Cardiac septum (tissue), 1 donor: ENCODE measurements at regions of chr11 and their contacts with region 1.

Region 1: DNA sequence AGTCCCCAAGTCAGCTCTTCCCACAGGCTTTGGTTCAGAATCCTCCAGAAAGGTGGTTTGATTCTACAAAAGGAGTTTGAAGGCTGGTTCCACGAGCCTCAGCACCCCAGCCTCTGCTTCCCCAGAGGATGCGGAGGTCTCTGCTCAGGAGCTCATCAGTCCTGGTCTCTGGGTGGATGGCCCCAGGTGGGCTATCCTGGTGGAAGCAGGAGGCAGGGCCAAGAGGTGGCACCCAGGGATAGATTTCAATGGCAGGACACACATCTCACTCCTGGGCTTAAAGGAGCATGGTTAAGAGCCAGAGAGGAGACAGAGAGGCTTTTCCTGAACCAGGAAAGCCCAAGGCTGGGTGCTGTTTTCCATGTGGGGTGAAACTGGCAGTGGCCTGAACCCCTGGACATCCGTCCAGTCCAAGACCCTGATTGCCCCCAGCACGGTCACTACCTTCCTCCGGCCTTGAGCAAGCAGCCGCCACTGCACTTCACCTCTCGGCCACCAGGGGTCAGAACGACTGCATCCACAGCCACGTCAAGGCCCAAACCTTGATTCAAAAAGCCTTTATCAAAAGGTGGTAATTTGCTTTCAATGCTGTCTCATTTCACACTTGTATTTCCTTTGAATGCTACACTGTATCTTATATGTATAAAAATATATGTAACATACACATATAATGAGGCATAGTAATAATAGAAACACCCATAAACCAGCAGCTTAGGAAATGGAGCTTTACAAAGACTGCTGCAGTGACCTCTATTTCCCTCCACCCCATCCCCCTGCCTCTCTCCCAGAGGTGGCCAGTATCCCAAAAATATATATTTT is 19.3 kb upstream of the FXYD2 start:
- DNase-seq: peak; percentile 90

Region 2: DNA sequence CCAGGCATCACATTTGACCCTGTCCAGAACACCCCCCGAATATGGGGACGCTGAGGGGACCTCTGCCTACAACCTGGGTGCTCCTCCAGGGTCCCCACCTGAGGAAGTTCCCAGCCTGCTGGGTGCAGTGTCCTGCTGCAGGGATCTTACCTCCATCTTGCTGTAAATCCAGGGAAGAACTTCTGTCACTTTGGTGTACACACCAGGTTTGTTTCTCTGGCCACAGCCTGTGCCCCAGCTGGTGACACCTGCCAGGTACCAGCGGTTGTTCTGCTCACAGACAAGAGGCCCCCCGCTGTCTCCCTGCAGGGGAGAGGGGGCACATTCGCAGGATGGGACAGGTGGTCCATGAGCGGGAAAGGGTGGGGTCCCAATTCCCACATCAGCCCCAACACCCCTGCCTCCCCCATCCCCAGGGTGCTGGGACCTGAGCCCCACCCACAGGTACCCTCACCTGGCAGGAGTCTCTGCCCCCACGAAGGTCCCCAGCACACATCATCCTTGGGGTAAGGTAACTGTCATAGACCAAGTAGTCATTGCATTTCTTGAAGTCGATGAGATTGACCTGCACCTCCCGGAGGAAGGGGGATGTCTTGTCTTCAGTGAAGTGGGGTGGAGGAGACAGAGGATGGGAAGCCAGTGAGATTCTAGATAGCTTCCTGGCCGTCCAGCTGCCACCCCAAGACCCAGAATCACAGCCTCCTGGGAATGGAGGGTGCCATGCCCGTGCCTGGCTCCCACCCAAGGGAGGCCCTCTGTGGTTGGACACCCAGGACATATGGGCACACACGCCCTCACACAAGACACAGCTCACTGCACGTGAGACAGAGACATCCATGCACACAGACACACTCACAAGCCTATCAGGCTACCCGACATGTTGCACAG is 59.9 kb after region 1 on chr11:
- intact Hi-C with region 1: loop called (anchors 2 kb)
- DNase-seq: no peak

Region 3: GRCh38 chr11:118051611-118052461 is 208.0 kb after region 1 on chr11:
- intact Hi-C with region 1: loop called (anchors 2 kb)
- DNase-seq: peak; percentile 53